ENCODE measurements at regions of chr12 and their contacts with region 1.

Region 1: GRCh38 chr12:12916135-12916944 is 25.0 kb downstream of the GPRC5A start:
- DNase-seq: no peak
- H3K4me3 ChIP-seq: no peak overlapping the region
- H3K27ac ChIP-seq: peak overlapping the region; percentile 21
- H3K27me3 ChIP-seq: no peaks in the 10 kb centered on the region
- CTCF ChIP-seq: peak; percentile 99

Region 2: GRCh38 chr12:12813120-12814101 is 102.9 kb before region 1 on chr12 and contains the start of gene DDX47:
- CTCF ChIA-PET with region 1: interaction called, 10 read pairs
- POLR2A ChIA-PET with region 1: interaction called, 6 read pairs
- DNase-seq: peak; percentile 74
- H3K4me3 ChIP-seq: peak within 1 kb of the TSS; percentile 91
- H3K27ac ChIP-seq: peak within 1 kb of the TSS; percentile 49
- H3K27me3 ChIP-seq: no peaks in the 10 kb centered on the region
- CTCF ChIP-seq: peak; percentile 90
- polyA plus RNA-seq, gene DDX47: 91.3 and 113 TPM in 2 replicates

Region 3: DNA sequence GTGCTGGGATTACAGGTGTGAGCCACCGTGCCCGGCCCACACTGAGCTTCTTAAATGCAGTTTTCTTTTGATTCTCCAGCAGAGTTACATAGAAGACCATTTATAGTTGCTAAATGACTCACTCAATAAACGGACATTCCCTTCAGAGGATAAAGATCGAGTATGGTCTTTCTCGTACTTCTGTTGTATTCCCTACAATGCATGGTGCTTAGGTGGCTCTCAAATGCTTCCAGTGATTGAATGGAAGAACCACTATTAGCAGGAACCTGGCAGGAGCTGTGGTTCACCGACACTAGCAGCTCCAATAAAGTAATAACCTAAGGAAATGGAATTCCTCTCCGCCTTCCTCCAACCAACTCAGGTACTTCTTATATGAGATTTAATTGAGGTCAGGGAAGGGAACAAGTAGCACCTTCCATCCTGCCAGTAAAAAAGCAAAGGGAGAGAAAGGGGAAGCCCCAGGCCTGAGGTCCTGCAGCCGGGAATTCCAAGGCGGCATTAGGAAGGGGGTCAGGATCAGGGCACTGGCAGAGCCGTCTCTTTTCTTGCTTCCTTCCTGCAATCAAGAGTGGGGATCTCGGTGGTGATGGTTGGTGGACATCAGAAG is 28.8 kb before region 1 on chr12:
- CTCF ChIA-PET with region 1: no interaction called
- POLR2A ChIA-PET with region 1: no interaction called
- DNase-seq: no peak
- H3K4me3 ChIP-seq: no peak overlapping the region
- H3K27ac ChIP-seq: no peak overlapping the region
- H3K27me3 ChIP-seq: no peaks in the 10 kb centered on the region
- CTCF ChIP-seq: no peak

Region 4: GRCh38 chr12:12899530-12900380 is 16.6 kb before region 1 on chr12:
- CTCF ChIA-PET with region 1: interaction called, 12 read pairs
- POLR2A ChIA-PET with region 1: no interaction called
- DNase-seq: peak; percentile 94
- H3K4me3 ChIP-seq: peak overlapping the region; percentile 31; the same call in 1 of the 2 replicates
- H3K27ac ChIP-seq: peak overlapping the region; percentile 92
- H3K27me3 ChIP-seq: no peaks in the 10 kb centered on the region
- CTCF ChIP-seq: no peak

Region 5: DNA sequence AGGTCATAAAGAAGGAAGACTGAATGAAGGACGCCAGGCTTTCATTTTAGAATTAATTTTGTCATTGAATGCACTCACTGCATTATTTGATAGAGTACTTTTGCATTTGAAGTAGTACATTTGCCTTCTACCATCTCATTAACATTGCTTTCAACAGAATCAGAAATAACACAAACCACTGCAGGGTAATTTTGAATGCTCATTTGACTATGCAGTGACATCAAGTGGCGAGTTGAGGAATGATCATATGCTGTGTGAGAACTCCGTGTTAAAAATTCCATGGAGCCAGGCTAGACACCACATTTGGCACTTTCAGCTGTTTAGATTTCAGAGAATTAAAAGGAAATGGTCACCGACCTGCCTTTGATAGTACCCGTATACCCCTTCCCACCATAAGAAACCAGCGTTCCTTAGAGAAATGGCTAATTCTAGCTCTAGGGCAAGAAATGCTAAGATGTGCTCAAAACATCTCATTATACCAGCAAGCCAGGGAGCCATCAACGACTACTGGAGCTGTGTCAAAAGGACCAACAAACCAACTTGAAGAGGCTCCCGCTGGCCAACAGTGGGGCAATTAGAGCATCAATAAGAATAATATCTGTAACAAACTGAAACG is 67.2 kb after region 1 on chr12:
- CTCF ChIA-PET with region 1: interaction called, 123 read pairs
- POLR2A ChIA-PET with region 1: no interaction called
- DNase-seq: no peak
- H3K4me3 ChIP-seq: no peak overlapping the region
- H3K27ac ChIP-seq: no peak overlapping the region
- H3K27me3 ChIP-seq: no peaks in the 10 kb centered on the region
- CTCF ChIP-seq: peak; percentile 69

Region 6: DNA sequence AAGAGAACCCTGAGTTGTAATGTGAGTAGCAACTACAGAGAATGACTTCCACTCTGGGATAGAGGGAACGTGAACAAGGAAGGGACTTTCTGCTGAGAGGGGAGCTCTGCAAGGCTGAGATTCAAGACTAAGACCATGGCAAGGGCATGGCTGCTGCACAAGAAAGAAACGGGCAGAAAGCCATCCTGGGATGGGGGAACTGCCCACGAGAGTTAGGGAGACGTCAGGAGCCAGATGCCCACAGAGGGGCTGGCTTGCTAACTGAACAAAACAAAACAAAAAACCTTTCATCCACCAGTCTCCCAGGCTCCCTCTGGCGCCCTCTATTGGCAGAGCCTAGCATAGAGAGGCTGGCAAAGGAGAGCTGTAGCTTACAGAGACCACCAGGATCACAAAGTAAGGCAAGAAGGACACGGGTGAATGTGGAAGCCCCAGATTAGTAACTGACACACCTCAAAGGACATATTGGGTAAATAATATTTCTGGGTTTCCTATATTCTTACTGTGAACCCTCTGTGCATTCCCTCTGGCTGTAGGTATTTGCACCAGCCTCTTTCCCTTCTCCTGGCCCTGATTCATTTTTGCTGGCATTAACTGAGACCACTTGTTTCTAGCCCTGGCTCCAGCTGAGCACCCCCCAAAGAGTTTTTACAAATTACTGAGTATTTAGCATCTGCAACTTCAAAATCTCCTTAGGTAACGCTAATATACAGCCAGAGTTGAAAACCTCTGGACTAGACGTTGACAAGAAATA is 618.5 kb after region 1 on chr12:
- CTCF ChIA-PET with region 1: interaction called, 11 read pairs
- POLR2A ChIA-PET with region 1: no interaction called
- DNase-seq: peak; percentile 10
- H3K4me3 ChIP-seq: peak overlapping the region; percentile 41
- H3K27ac ChIP-seq: no peak overlapping the region
- H3K27me3 ChIP-seq: no peaks in the 10 kb centered on the region
- CTCF ChIP-seq: peak; percentile 98

Measured in AG04450 (cell line).